ENCODE measurements at regions of chr2 and their contacts with region 1.

Region 1: GRCh38 chr2:128395640-128396499 is 77.2 kb upstream of the HS6ST1 start:
- DNase-seq: no peak
- ATAC-seq: no peak
- H3K4me3 ChIP-seq: no peak overlapping the region
- H3K4me3 Mint-ChIP-seq: no peak overlapping the region
- H3K27ac ChIP-seq: no peak overlapping the region
- H3K27ac Mint-ChIP-seq: no peak overlapping the region
- H3K4me1 ChIP-seq: no peaks in the 10 kb centered on the region
- H3K4me1 Mint-ChIP-seq: no peaks in the 10 kb centered on the region
- H3K27me3 ChIP-seq: no peaks in the 10 kb centered on the region
- H3K27me3 Mint-ChIP-seq: peaks cover 3% of the 10 kb centered on the region
- CTCF ChIP-seq: no peak

Region 2: GRCh38 chr2:128305159-128306087 is 90.4 kb before region 1 on chr2:
- CTCF ChIA-PET with region 1: no interaction called
- POLR2A ChIA-PET with region 1: no interaction called
- intact Hi-C with region 1: no loop called
- DNase-seq: peak; percentile 60
- ATAC-seq: peak; percentile 98
- H3K4me3 ChIP-seq: no peak overlapping the region
- H3K4me3 Mint-ChIP-seq: no peak overlapping the region
- H3K27ac ChIP-seq: no peak overlapping the region
- H3K27ac Mint-ChIP-seq: no peak overlapping the region
- H3K4me1 ChIP-seq: peaks cover 4 to 14% of the 10 kb centered on the region in 2 donors
- H3K4me1 Mint-ChIP-seq: peaks cover 47% of the 10 kb centered on the region
- H3K27me3 ChIP-seq: no peaks in the 10 kb centered on the region
- H3K27me3 Mint-ChIP-seq: no peaks in the 10 kb centered on the region
- CTCF ChIP-seq: no peak

Region 3: GRCh38 chr2:129361717-129362116 is 965.8 kb after region 1 on chr2:
- CTCF ChIA-PET with region 1: no interaction called
- POLR2A ChIA-PET with region 1: no interaction called
- intact Hi-C with region 1: no loop called
- DNase-seq: no peak
- ATAC-seq: no peak
- H3K4me3 ChIP-seq: no peak overlapping the region
- H3K4me3 Mint-ChIP-seq: no peak overlapping the region
- H3K27ac ChIP-seq: no peak overlapping the region
- H3K27ac Mint-ChIP-seq: no peak overlapping the region
- H3K4me1 ChIP-seq: no peaks in the 10 kb centered on the region
- H3K4me1 Mint-ChIP-seq: no peaks in the 10 kb centered on the region
- H3K27me3 ChIP-seq: peaks cover 0 to 2% (median 0%) of the 10 kb centered on the region in 4 experiments
- H3K27me3 Mint-ChIP-seq: peaks cover 3% of the 10 kb centered on the region
- CTCF ChIP-seq: no peak

Region 4: GRCh38 chr2:129575431-129575830 is 1179.6 kb after region 1 on chr2:
- CTCF ChIA-PET with region 1: no interaction called
- POLR2A ChIA-PET with region 1: interaction called, 13 read pairs
- intact Hi-C with region 1: no loop called
- DNase-seq: no peak
- ATAC-seq: no peak
- H3K4me3 ChIP-seq: no peak overlapping the region
- H3K4me3 Mint-ChIP-seq: no peak overlapping the region
- H3K27ac ChIP-seq: no peak overlapping the region
- H3K27ac Mint-ChIP-seq: no peak overlapping the region
- H3K4me1 ChIP-seq: no peaks in the 10 kb centered on the region
- H3K4me1 Mint-ChIP-seq: no peaks in the 10 kb centered on the region
- H3K27me3 ChIP-seq: no peaks in the 10 kb centered on the region
- H3K27me3 Mint-ChIP-seq: no peaks in the 10 kb centered on the region
- CTCF ChIP-seq: no peak